ENCODE measurements at regions of chr3 and their contacts with region 1.

Region 1: DNA sequence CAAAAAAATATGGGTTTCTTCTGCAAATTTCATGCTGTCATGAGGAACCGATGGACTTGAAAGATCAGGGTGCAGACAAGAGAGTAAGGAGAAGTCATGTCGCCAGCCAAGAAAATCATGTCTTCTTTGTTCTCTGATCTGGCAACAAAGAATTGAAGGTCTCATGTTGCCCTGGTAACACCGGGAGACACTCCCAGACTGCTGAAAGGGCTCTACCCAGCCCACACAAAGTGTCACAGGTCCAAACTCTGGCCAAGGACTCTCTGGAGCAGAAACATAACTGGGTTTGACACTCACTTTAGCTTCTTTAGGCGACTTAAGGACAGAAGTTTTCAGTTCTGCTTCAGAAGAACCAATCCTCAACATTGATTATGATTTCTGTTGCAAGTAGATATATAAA is 42.9 kb downstream of the SIDT1 start:
- DNase-seq: no peak
- ATAC-seq: peak; percentile 46; the same call in 1 of the 2 replicates
- H3K4me3 Mint-ChIP-seq: no peak overlapping the region
- H3K27ac Mint-ChIP-seq: no peak overlapping the region
- H3K4me1 Mint-ChIP-seq: peaks cover 4% of the 10 kb centered on the region; the same call in 1 of the 2 replicates
- H3K27me3 Mint-ChIP-seq: no peaks in the 10 kb centered on the region
- CTCF ChIP-seq: no peak

Region 2: GRCh38 chr3:113495035-113495434 is 80.2 kb before region 1 on chr3:
- CTCF ChIA-PET with region 1: interaction called, 21 read pairs
- POLR2A ChIA-PET with region 1: no interaction called
- DNase-seq: no peak
- ATAC-seq: no peak
- H3K4me3 Mint-ChIP-seq: no peak overlapping the region
- H3K27ac Mint-ChIP-seq: no peak overlapping the region
- H3K4me1 Mint-ChIP-seq: no peaks in the 10 kb centered on the region
- H3K27me3 Mint-ChIP-seq: no peaks in the 10 kb centered on the region
- CTCF ChIP-seq: 0 out of 2 replicates have a peak, but pooled peaks have one; percentile 24

Region 3: DNA sequence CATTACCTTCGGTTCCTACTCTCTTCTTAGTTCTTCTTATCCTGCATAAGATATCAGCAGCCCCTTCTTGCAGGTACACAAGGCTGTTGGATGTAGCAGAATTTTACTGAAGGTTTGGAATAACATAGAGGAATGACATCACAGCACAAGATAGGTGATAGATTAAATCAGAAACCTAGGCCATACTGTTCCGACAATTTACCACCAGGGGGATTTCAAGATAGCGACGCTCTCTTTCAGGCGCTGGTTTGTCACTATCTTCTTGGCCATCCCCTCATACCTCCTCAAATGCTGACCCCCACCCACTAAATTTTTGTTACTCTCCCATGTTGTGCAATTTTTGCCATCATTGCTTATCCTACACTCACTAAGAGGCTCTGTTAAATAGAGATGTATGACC is 39.3 kb before region 1 on chr3:
- CTCF ChIA-PET with region 1: interaction called, 10 read pairs
- POLR2A ChIA-PET with region 1: no interaction called
- DNase-seq: no peak
- ATAC-seq: peak; percentile 68
- H3K4me3 Mint-ChIP-seq: no peak overlapping the region
- H3K27ac Mint-ChIP-seq: no peak overlapping the region
- H3K4me1 Mint-ChIP-seq: peaks cover 13% of the 10 kb centered on the region
- H3K27me3 Mint-ChIP-seq: peaks cover 62% of the 10 kb centered on the region
- CTCF ChIP-seq: peak; percentile 31; the same call in 1 of the 2 replicates

Region 4: DNA sequence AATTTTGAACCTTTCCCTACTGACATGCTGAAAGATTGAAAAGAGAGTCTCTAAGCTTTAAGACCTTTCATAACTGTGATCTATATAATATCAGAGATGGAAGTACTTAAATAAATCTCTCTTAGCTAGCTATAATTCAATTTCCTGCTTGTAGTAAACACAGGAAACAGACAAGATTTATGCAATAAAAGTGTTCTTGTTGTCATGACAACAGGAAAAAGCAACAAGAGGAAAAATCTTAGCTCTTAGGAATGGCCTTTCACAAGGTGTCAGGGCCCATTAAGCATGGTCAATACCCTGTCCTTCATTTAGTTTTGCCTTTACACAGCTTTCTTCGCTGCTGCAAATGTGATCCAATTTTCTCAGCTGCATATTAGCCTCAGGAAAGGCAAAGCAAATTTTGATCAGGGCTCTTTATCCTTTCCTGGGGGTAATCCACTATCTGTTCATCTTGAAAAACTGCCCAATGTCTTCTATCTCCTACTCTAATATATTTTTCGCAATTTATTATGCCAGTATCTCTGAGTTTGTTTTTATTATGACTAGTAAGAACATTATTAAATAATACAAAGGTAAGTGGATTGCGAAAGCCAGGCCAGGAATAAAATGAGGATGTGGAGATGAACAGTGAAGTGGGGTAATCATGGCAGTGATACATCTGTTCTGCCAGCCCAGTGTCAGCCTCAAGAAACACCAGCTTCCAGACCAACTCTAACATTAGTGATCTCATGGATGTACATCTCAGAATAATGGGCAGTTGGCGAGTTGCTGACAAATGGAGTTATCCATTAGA is 14.2 kb before region 1 on chr3:
- CTCF ChIA-PET with region 1: interaction called, 16 read pairs
- POLR2A ChIA-PET with region 1: no interaction called
- DNase-seq: no peak
- ATAC-seq: no peak
- H3K4me3 Mint-ChIP-seq: no peak overlapping the region
- H3K27ac Mint-ChIP-seq: no peak overlapping the region
- H3K4me1 Mint-ChIP-seq: no peaks in the 10 kb centered on the region
- H3K27me3 Mint-ChIP-seq: no peaks in the 10 kb centered on the region
- CTCF ChIP-seq: no peak

Region 5: GRCh38 chr3:113606539-113607218 is 31.5 kb after region 1 on chr3:
- CTCF ChIA-PET with region 1: interaction called, 16 read pairs
- POLR2A ChIA-PET with region 1: no interaction called
- DNase-seq: no peak
- ATAC-seq: peak; percentile 70
- H3K4me3 Mint-ChIP-seq: peak overlapping the region; percentile 14; the same call in 1 of the 2 replicates
- H3K27ac Mint-ChIP-seq: peak overlapping the region; percentile 75
- H3K4me1 Mint-ChIP-seq: peaks cover 34% of the 10 kb centered on the region
- H3K27me3 Mint-ChIP-seq: no peaks in the 10 kb centered on the region
- CTCF ChIP-seq: no peak

Measured in WTC11 (cell line).